SK-N-SH (cell line): ENCODE measurements at regions of chr9 and their contacts with region 1.

Region 1: GRCh38 chr9:1951446-1951845 is 63.7 kb upstream of the SMARCA2 start:
- DNase-seq: no peak
- H3K4me3 ChIP-seq: no peak overlapping the region
- H3K27ac ChIP-seq: no peak overlapping the region
- H3K4me1 ChIP-seq: no peaks in the 10 kb centered on the region
- H3K27me3 ChIP-seq: no peaks in the 10 kb centered on the region
- CTCF ChIP-seq: no peak
- EP300 ChIP-seq: no peak
- RAD21 ChIP-seq: no peak

Region 2: GRCh38 chr9:1939926-1940368 is 11.5 kb before region 1 on chr9:
- CTCF ChIA-PET with region 1: interaction called, 10 read pairs
- POLR2A ChIA-PET with region 1: no interaction called
- DNase-seq: peak; percentile 54
- H3K4me3 ChIP-seq: no peak overlapping the region
- H3K27ac ChIP-seq: no peak overlapping the region
- H3K4me1 ChIP-seq: no peaks in the 10 kb centered on the region
- H3K27me3 ChIP-seq: no peaks in the 10 kb centered on the region
- CTCF ChIP-seq: peak; percentile 54
- EP300 ChIP-seq: no peak
- RAD21 ChIP-seq: peak; percentile 62

Region 3: GRCh38 chr9:2043881-2044462 is 92.5 kb after region 1 on chr9:
- CTCF ChIA-PET with region 1: no interaction called
- POLR2A ChIA-PET with region 1: no interaction called
- DNase-seq: no peak
- H3K4me3 ChIP-seq: no peak overlapping the region
- H3K27ac ChIP-seq: no peak overlapping the region
- H3K4me1 ChIP-seq: no peaks in the 10 kb centered on the region
- H3K27me3 ChIP-seq: no peaks in the 10 kb centered on the region
- CTCF ChIP-seq: no peak
- EP300 ChIP-seq: no peak
- RAD21 ChIP-seq: no peak